B cell (primary cell): ENCODE measurements at regions of chr5 and their contacts with region 1.

Region 1: DNA sequence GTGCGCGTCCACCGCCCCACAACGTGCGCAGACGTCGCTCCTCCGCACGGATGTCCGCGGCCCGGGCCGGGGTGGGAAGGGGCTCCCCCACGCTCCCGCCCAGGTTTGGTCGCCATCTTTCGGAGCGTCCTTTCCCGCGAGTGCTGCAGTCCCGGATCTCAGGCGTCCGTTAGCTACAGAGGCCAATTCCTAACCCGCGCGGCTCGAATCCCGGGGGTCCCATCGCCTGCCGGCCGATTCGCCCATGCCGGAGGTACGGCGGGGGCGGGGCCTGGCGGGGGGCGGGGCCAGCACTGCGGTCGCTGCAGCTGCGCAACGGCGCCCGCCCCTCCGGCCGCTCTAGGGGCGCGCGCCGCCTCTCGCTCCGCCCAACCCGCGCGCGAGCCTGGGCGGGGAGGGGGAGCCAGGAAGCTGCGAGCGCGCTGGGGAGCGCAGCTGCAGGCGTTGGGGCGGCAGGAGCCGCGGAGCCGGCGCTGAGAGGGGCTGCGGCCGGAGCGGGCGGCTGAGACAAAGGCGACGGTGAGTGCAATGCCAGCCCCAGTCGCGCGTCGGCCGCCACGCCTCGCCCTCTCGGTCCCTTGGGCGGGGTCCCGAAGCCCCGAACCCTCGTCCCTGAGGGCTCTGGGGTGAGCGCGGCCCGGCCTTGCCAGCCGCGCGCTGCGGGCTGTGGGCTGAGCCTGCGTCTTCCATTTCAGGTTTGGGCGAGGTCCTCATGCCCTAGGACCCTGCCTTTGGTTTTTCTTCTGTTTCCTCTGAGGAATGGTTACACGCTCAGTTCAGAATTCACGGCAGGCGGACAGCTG is at the start of gene CDC42SE2:
- DNase-seq: peak; percentile 93
- ATAC-seq: peak; percentile 87
- H3K4me3 ChIP-seq: peak within 1 kb of the TSS; percentile 76 to 100 (median 95)
- H3K4me3 Mint-ChIP-seq: peak within 1 kb of the TSS; percentile 89
- H3K27ac ChIP-seq: peak within 1 kb of the TSS; percentile 83 to 88
- H3K27ac Mint-ChIP-seq: peak within 1 kb of the TSS; percentile 98
- H3K4me1 ChIP-seq: peaks cover 33 to 41% of the 10 kb centered on the region in 2 donors
- H3K4me1 Mint-ChIP-seq: peaks cover 42% of the 10 kb centered on the region
- H3K27me3 ChIP-seq: no peaks in the 10 kb centered on the region
- H3K27me3 Mint-ChIP-seq: no peaks in the 10 kb centered on the region
- CTCF ChIP-seq: no peak
- total RNA-seq, gene CDC42SE2: 161 and 162 TPM in 2 replicates

Region 2: GRCh38 chr5:131170540-131171275 is 93.1 kb before region 1 on chr5 and contains the start of gene LYRM7:
- CTCF ChIA-PET with region 1: interaction called, 7 read pairs
- POLR2A ChIA-PET with region 1: interaction called, 6 read pairs
- intact Hi-C with region 1: loop called (anchors 1 kb)
- DNase-seq: peak; percentile 98
- ATAC-seq: peak; percentile 96
- H3K4me3 ChIP-seq: peak within 1 kb of the TSS; percentile 78 to 89 (median 79)
- H3K4me3 Mint-ChIP-seq: peak within 1 kb of the TSS; percentile 98
- H3K27ac ChIP-seq: peak within 1 kb of the TSS; percentile 77 to 81
- H3K27ac Mint-ChIP-seq: peak within 1 kb of the TSS; percentile 94
- H3K4me1 ChIP-seq: peaks cover 24% of the 10 kb centered on the region in 2 donors
- H3K4me1 Mint-ChIP-seq: peaks cover 47% of the 10 kb centered on the region
- H3K27me3 ChIP-seq: no peaks in the 10 kb centered on the region
- H3K27me3 Mint-ChIP-seq: no peaks in the 10 kb centered on the region
- CTCF ChIP-seq: no peak
- total RNA-seq, gene LYRM7: 11.6 and 12.3 TPM in 2 replicates

Region 3: GRCh38 chr5:131224387-131225201 is 39.3 kb before region 1 on chr5:
- CTCF ChIA-PET with region 1: interaction called, 10 read pairs
- POLR2A ChIA-PET with region 1: interaction called, 8 read pairs
- intact Hi-C with region 1: no loop called
- DNase-seq: peak; percentile 73
- ATAC-seq: peak; percentile 82
- H3K4me3 ChIP-seq: peak overlapping the region in 1 of 5 experiments; percentile 8
- H3K4me3 Mint-ChIP-seq: no peak overlapping the region
- H3K27ac ChIP-seq: peak overlapping the region; percentile 59 to 75
- H3K27ac Mint-ChIP-seq: no peak overlapping the region
- H3K4me1 ChIP-seq: peaks cover 48 to 51% of the 10 kb centered on the region in 2 donors
- H3K4me1 Mint-ChIP-seq: peaks cover 21% of the 10 kb centered on the region
- H3K27me3 ChIP-seq: no peaks in the 10 kb centered on the region
- H3K27me3 Mint-ChIP-seq: no peaks in the 10 kb centered on the region
- CTCF ChIP-seq: no peak

Region 4: DNA sequence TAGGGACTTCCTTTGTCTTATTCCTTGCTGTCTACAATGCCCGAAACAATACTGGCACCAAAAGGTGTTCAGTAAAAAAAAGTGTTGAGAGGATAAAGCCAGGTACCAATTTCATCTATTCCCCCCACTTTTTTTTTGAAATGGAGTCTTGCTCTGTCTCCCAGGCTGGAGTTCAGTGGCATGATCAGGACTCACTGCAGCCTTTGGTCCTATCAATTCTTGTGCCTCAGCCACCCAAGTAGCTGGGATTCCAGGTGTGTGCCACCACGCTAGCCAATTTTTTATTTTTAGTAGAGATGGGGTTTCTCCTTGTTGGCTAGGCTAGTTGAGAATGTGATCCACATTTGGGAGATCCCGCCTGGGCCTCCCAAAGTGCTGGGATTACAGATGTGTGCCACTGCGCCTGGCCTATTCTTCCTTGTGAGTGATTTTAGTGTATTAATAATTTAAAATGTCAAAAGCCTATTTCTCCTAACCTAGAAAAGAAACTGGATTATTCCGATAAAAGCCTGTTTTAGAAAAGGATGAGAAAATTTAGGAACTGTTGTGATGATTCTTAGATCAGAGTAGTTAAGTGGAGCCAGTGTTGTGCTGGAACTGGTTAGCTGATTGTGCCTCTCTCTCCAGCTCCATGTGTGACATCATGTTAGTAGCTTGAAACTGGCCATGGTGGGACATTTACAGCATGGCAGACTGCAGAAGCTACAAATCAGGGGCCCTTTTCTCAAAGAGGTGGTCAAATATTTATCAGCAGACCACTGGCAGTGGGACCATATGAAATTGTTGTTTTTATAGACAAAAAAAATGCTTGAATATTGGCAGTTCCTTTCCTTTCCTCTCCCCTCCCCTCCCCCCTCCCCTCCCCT is 14.3 kb after region 1 on chr5:
- CTCF ChIA-PET with region 1: interaction called, 20 read pairs
- POLR2A ChIA-PET with region 1: interaction called, 9 read pairs
- intact Hi-C with region 1: loop called (anchors 1 kb)
- DNase-seq: no peak
- ATAC-seq: no peak
- H3K4me3 ChIP-seq: no peak overlapping the region
- H3K4me3 Mint-ChIP-seq: no peak overlapping the region
- H3K27ac ChIP-seq: peak overlapping the region in 1 of 2 donors; percentile 70
- H3K27ac Mint-ChIP-seq: peak overlapping the region; percentile 69
- H3K4me1 ChIP-seq: peaks cover 70 to 83% of the 10 kb centered on the region in 2 donors
- H3K4me1 Mint-ChIP-seq: peaks cover 78% of the 10 kb centered on the region
- H3K27me3 ChIP-seq: no peaks in the 10 kb centered on the region
- H3K27me3 Mint-ChIP-seq: no peaks in the 10 kb centered on the region
- CTCF ChIP-seq: no peak

Region 5: DNA sequence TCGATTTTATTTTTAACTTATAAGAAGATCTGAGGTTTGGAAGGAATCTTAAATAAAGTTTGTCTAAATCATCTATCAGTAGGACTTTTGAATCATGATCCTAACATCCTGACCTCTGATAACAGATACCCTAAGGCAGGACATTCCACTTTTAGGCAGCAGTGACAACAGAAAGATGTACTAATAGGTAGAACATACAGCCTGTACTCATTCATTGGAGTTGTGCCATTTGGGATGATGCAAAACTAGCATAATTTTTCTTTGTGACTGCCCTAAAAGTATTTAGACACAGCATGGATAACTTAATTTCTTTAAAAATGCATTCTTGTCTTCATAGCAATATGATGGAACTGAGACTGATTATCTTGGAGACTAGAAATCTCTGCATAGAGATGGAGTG is 39.7 kb after region 1 on chr5:
- CTCF ChIA-PET with region 1: interaction called, 3 read pairs
- POLR2A ChIA-PET with region 1: no interaction called
- intact Hi-C with region 1: loop called (anchors 5 kb)
- DNase-seq: no peak
- ATAC-seq: no peak
- H3K4me3 ChIP-seq: no peak overlapping the region
- H3K4me3 Mint-ChIP-seq: no peak overlapping the region
- H3K27ac ChIP-seq: peak overlapping the region in 1 of 2 donors; percentile 67
- H3K27ac Mint-ChIP-seq: no peak overlapping the region
- H3K4me1 ChIP-seq: peaks cover 22 to 33% of the 10 kb centered on the region in 2 donors
- H3K4me1 Mint-ChIP-seq: peaks cover 60% of the 10 kb centered on the region
- H3K27me3 ChIP-seq: no peaks in the 10 kb centered on the region
- H3K27me3 Mint-ChIP-seq: no peaks in the 10 kb centered on the region
- CTCF ChIP-seq: no peak

Region 6: GRCh38 chr5:131338051-131338453 is 74.2 kb after region 1 on chr5:
- CTCF ChIA-PET with region 1: interaction called, 5 read pairs
- POLR2A ChIA-PET with region 1: interaction called, 11 read pairs
- intact Hi-C with region 1: no loop called
- DNase-seq: no peak
- ATAC-seq: no peak
- H3K4me3 ChIP-seq: no peak overlapping the region
- H3K4me3 Mint-ChIP-seq: no peak overlapping the region
- H3K27ac ChIP-seq: no peak overlapping the region
- H3K27ac Mint-ChIP-seq: no peak overlapping the region
- H3K4me1 ChIP-seq: peaks cover 4 to 9% of the 10 kb centered on the region in 2 donors
- H3K4me1 Mint-ChIP-seq: peaks cover 62% of the 10 kb centered on the region
- H3K27me3 ChIP-seq: no peaks in the 10 kb centered on the region
- H3K27me3 Mint-ChIP-seq: no peaks in the 10 kb centered on the region
- CTCF ChIP-seq: no peak

Region 7: GRCh38 chr5:131375351-131375750 is 111.5 kb after region 1 on chr5:
- CTCF ChIA-PET with region 1: interaction called, 117 read pairs
- POLR2A ChIA-PET with region 1: interaction called, 8 read pairs
- intact Hi-C with region 1: loop called (anchors 1 kb)
- DNase-seq: peak; percentile 50
- ATAC-seq: no peak
- H3K4me3 ChIP-seq: peak overlapping the region in 2 of 5 experiments; percentile 5 to 37
- H3K4me3 Mint-ChIP-seq: peak overlapping the region; percentile 63
- H3K27ac ChIP-seq: peak overlapping the region; percentile 71 to 99
- H3K27ac Mint-ChIP-seq: peak overlapping the region; percentile 81
- H3K4me1 ChIP-seq: peaks cover 75 to 94% of the 10 kb centered on the region in 2 donors
- H3K4me1 Mint-ChIP-seq: peaks cover 84% of the 10 kb centered on the region
- H3K27me3 ChIP-seq: no peaks in the 10 kb centered on the region
- H3K27me3 Mint-ChIP-seq: no peaks in the 10 kb centered on the region
- CTCF ChIP-seq: no peak